ENCODE measurements at regions of chr3 and their contacts with region 1.

Region 1: GRCh38 chr3:158570999-158571974 is at the start of gene MLF1:
- DNase-seq: peak; percentile 97 to 98
- ATAC-seq: peak; percentile 99 to 100 (median 99)
- H3K4me3 ChIP-seq: peak within 1 kb of the TSS; percentile 57 to 92 (median 66)
- H3K27ac ChIP-seq: peak within 1 kb of the TSS; percentile 67 to 91 (median 80)
- H3K4me1 ChIP-seq: peaks cover 0 to 37% (median 14%) of the 10 kb centered on the region in 9 donors
- H3K27me3 ChIP-seq: peaks cover 0 to 16% (median 0%) of the 10 kb centered on the region in 7 donors
- CTCF ChIP-seq: no peak
- total RNA-seq, gene MLF1: 78.4 to 257 (median 121) TPM

Region 2: DNA sequence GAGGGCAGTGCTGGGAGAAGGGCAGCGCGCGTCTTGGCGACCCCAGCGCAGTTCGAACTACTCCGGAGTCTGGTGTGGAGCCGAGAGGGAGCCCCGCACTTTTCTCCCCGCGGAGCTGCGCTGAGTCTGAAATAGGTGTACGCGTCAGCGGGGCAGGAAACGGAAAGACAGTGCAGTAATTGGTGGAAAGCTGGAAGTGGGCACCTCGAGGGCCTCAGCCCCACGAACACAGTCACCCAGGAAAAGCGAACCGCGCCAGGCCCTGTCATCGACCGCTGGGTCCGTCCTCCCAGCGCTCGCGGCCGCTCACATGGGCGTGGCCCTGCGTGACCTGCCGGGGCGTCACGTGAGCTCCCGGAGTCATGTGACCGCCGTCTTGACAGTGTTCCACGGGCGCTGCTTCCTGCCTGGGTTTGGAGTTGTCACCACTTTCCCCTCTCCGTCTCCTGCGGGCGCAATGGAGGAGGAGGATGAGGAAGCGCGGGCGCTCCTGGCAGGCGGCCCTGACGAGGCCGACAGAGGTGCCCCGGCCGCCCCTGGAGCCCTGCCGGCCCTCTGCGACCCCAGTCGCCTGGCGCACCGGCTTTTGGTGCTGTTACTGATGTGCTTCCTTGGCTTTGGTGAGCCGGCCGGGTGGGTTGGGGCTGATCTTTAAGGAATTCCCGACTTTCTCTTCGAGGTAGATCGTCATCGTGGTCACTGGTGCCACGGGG is 230.6 kb after region 1 on chr3 and contains the start of gene MFSD1:
- intact Hi-C with region 1: loop called in 1 of 10 experiments (anchors 10 kb)
- DNase-seq: peak; percentile 94 to 96
- ATAC-seq: peak; percentile 99 to 100 (median 99)
- H3K4me3 ChIP-seq: peak within 1 kb of the TSS; percentile 54 to 95 (median 84)
- H3K27ac ChIP-seq: peak within 1 kb of the TSS; percentile 45 to 95 (median 88)
- H3K4me1 ChIP-seq: peaks cover 0 to 53% (median 26%) of the 10 kb centered on the region in 9 donors
- H3K27me3 ChIP-seq: no peaks in the 10 kb centered on the region
- CTCF ChIP-seq: no peak
- total RNA-seq, gene MFSD1: 20.8 to 45.5 (median 23.9) TPM